PC-9 (cell line): ENCODE measurements at regions of chr5 and their contacts with region 1.

Region 1: DNA sequence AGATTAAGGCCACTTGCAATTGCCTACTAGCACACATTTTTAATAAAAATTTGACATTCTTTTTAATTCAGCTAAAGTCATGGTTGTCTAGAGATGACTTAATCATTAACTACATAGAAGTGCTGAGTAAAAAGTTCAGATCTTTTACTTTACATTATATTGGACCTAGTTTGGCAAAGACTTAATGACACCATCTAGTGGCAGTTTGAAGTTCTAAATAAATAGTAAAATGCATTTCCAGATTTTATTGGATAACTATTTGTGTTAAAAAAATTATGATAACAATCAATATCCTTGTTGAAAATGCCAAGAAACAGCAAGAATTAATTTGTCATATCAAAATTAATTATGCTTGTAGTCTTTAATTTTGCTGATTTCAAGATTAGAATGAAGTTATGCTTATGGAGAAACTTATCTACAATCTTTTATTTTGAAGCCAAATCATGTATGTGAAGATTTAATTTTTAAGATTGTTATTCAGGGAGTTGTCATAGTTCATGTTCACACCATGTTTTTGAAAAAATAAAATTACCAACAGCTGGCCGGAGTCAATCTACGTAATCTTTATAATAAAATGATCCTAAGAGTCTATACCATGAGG is 69.6 kb upstream of the PJA2 start:
- DNase-seq: no peak
- H3K4me3 ChIP-seq: no peak overlapping the region
- H3K27ac ChIP-seq: no peak overlapping the region
- H3K4me1 ChIP-seq: no peaks in the 10 kb centered on the region
- H3K27me3 ChIP-seq: no peaks in the 10 kb centered on the region
- CTCF ChIP-seq: peak; percentile 60

Region 2: DNA sequence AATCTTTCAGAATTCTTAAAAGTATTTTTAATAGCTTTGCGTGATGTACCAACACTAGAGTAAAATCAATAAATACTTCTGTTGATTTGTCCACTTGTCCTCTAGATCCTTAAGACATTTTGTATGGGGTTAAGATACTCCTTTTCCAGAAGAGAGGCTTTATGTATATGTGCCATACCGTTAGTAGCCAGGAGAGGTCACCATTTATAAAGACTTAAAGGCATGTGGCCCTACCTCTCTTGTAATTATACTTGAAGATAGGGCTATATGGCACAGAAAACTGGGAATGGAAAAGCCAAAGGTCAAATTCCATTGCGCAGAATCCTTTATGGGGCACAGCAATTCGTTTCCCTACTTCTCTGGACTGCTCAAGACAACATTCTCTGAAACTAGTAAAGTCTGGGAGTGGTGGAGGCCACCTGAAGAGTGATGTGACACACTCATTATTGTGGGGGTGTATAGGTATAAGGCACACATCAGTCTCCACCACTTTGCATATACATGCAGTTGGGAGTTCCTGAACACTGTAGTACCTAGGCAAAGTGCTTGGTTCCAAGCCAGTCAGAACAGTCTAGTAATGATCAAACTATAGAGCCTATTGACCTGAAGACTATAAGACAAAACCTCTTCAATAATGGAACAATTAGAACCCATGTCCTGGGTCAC is 957.4 kb before region 1 on chr5:
- CTCF ChIA-PET with region 1: no interaction called
- POLR2A ChIA-PET with region 1: no interaction called
- intact Hi-C with region 1: loop called (anchors 5 kb)
- DNase-seq: peak in 1 of 2 experiments; percentile 9
- H3K4me3 ChIP-seq: no peak overlapping the region
- H3K27ac ChIP-seq: no peak overlapping the region
- H3K4me1 ChIP-seq: no peaks in the 10 kb centered on the region
- H3K27me3 ChIP-seq: no peaks in the 10 kb centered on the region
- CTCF ChIP-seq: peak; percentile 77

Region 3: GRCh38 chr5:108919591-108920326 is 559.6 kb before region 1 on chr5:
- CTCF ChIA-PET with region 1: no interaction called
- POLR2A ChIA-PET with region 1: no interaction called
- intact Hi-C with region 1: loop called (anchors 10 kb)
- DNase-seq: no peak
- H3K4me3 ChIP-seq: no peak overlapping the region
- H3K27ac ChIP-seq: no peak overlapping the region
- H3K4me1 ChIP-seq: no peaks in the 10 kb centered on the region
- H3K27me3 ChIP-seq: no peaks in the 10 kb centered on the region
- CTCF ChIP-seq: peak; percentile 71